ENCODE measurements at regions of chr11 and their contacts with region 1.

Region 1: GRCh38 chr11:34620820-34621792 is at the start of gene EHF:
- DNase-seq: peak; percentile 73
- H3K4me3 Mint-ChIP-seq: peak within 1 kb of the TSS; percentile 91
- H3K27ac Mint-ChIP-seq: peak within 1 kb of the TSS; percentile 96
- H3K4me1 Mint-ChIP-seq: peaks cover 44% of the 10 kb centered on the region
- H3K27me3 Mint-ChIP-seq: no peaks in the 10 kb centered on the region
- CTCF ChIP-seq: no peak
- total RNA-seq, gene EHF: 286 and 299 TPM in 2 replicates

Region 2: DNA sequence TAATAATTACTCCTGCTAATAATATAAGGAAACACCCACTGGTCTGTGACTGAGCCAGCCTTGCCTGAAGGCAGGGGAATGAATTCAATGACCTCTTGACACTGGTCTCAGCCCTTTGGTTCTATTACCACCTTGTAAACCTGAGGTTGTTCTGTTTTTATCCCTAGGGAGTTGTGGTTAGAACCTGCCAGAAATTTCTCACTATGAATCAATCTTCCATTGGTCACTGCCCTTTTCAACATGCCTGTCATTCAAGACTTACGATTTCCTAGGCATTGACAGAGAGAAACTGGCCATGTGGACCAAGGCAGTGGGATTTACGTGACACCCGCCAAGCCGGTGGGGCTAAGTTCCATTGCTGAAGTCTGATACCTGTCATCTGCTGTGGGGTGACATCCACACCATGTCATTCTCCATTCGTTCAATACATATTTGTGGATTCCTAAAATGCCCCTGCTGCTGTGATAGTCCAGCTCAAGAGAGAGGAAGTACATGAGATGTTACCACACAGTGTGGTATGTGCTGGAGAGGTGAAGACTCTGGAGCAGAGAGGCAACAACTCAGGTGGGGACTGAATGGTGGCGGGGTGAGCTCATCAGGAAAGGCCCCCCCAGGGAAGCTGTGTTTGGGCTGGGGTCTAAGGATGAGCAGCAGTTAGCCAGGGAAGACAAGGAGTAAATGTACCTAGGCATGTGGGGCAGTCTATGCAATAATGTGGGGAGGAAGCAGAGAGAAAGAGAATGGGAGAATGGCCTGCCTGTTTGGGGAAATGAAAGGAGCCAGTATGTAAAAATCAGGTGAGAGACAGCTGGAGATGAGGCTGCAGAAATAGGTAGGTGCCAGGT is 15.4 kb before region 1 on chr11:
- CTCF ChIA-PET with region 1: interaction called, 11 read pairs
- intact Hi-C with region 1: loop called (anchors 2 kb)
- DNase-seq: no peak
- H3K4me3 Mint-ChIP-seq: no peak overlapping the region
- H3K27ac Mint-ChIP-seq: peak overlapping the region; percentile 42
- H3K4me1 Mint-ChIP-seq: peaks cover 75% of the 10 kb centered on the region
- H3K27me3 Mint-ChIP-seq: no peaks in the 10 kb centered on the region
- CTCF ChIP-seq: no peak

Region 3: DNA sequence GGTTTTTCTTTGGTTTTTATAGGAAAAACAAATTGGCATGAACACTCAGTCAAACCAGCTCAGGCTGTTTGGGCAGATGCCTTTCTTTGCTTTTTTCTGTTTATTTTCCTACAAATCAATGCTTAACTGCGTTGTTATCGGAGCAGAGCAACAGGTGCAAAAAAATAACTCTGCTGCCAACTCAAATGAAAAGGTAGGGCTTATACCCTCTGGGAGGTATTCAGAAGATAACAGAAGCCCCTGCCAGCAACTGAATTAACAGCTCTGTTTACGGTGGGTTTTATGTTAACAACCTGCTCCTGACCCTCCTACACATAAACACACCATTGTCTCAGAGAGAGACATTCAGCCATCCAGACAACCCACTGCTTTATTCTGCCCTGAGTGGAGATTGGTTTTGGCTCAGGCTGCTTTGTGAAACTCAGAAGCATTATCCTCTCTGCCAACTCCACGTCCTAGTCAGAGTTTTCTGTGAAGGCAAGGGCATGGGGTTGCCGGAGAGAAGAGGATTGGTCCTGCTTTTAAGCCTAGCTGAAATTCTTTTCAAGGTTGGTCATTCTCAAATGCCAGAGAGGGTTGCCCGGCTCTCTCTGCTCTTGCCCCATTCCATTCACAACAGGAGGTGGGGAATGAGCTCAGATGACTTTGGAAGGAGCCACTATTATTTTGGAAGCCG is 11.1 kb after region 1 on chr11:
- CTCF ChIA-PET with region 1: interaction called, 5 read pairs
- intact Hi-C with region 1: loop called (anchors 1 kb)
- DNase-seq: peak; percentile 52
- H3K4me3 Mint-ChIP-seq: peak overlapping the region; percentile 75
- H3K27ac Mint-ChIP-seq: peak overlapping the region; percentile 98
- H3K4me1 Mint-ChIP-seq: peaks cover 85% of the 10 kb centered on the region
- H3K27me3 Mint-ChIP-seq: no peaks in the 10 kb centered on the region
- CTCF ChIP-seq: no peak

Region 4: DNA sequence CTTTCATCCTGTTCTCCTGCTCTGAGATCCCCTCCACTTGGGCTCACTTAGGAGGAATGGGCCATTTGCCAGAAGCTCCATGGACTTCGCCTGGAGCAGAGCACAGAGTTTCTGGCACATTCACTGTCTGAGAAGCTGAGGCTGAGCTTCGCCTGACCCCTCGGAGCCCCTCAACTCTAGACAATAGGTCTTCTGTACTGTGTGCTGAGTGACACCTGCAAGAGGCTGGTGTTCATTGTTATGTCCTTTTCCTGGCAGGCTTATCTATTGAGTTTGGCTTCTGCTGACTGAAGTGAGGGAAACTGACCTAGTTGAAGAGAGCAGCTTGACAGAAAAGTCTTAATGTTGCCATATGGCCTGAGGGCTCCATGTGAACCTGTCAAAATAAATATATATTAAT is 124.1 kb after region 1 on chr11:
- CTCF ChIA-PET with region 1: no interaction called
- intact Hi-C with region 1: no loop called
- DNase-seq: no peak
- H3K4me3 Mint-ChIP-seq: no peak overlapping the region
- H3K27ac Mint-ChIP-seq: no peak overlapping the region
- H3K4me1 Mint-ChIP-seq: peaks cover 6% of the 10 kb centered on the region
- H3K27me3 Mint-ChIP-seq: no peaks in the 10 kb centered on the region
- CTCF ChIP-seq: no peak